Activated CD4-positive, alpha-beta memory T cell treated with anti-CD3 and anti-CD28 coated beads, Interleukin-2, amount 10 ng/mL, durations not matched to agents 7 days and 5 days (primary cell): ENCODE measurements at regions of chr11 and their contacts with region 1.

Region 1: DNA sequence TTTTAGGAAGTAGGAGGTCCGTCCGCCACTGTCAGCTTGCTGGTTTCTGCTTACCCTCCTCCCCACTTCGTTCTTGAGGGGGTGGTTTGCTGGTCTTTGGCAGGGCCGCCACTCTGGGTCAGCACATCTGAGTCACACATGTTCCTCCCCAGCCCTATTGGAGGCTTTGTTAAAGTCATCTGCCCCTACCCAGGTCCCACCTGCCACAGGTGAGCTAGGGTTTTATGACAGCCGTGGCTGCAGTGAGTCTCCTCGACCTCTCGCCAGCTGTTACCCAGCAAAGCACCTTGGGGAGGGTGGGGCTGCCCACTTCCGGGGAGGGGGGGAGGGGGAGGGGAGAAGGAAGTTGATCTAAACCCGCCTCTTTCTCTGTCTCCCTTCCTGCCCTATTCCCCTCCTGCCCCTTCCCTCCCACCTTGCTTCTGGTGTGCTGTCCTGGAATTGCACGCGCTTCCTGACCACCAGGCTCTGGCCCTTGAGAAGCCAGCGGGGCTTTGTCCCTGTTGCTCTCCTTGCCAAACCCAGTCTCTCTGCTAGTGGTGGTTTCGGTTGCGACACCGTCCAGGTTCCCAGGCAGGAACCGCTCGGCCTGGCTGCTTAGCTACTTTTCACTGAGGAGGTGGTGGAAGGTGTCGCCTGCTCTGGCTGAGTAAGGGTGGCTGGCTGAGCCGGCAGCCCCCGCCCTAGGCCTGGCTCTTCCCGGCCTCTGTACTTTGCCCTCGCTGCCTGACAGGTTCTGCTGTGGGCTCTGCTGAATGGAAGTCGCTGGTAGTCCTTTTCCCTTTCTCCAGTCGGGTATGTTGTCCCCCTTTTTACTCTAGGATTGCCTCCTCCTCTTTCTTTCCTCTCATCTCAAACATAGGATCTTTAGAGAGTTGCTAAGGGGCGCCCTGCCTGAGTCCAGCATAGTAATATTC is 28.5 kb downstream of the RCOR2 start:
- DNase-seq: peak; percentile 79
- H3K4me3 Mint-ChIP-seq: peak overlapping the region; percentile 93
- H3K27ac Mint-ChIP-seq: peak overlapping the region; percentile 93
- H3K4me1 Mint-ChIP-seq: peaks cover 75% of the 10 kb centered on the region
- H3K27me3 Mint-ChIP-seq: no peaks in the 10 kb centered on the region

Region 2: DNA sequence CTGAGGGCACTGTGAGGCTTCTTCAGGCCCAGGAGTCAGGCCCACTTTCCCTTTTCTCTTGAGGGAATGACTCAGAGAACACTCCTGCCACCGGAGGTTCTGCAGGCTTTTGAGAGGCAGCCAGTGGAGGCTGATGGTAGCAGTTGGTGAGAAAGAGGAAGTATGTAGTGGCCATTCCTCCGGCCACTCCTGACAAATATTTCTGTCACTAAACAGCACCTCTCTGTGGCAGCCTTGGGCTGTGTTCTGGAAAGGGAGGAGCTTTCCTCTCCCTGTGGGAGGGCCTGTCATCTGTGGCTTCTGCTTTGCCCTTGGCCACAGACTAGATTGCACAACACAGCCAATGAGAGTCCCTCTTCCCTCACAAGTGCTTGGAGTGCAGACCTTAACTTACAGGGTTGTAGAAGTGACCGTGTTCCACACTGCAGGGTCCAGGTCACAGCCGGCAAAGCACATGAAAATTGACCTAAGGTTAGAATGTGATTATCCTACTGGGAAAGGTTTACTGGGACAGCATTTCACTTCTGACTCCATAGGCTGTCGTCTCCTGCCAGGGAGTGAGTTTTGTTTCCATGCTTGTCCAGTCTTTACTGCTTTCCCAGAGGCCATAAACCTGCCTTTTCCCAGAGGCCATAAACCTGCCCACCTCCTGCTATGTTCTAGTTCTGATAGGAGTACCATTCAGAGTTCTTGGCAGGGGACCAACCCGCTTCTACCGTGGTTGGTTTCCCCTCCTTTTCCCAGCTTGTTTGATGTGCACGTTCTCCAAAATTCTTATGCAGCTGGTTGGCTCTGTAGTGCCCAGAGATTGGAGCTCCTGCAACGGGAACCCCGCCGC is 16.2 kb before region 1 on chr11:
- CTCF ChIA-PET with region 1: interaction called, 11 read pairs
- POLR2A ChIA-PET with region 1: interaction called, 13 read pairs
- DNase-seq: peak; percentile 59
- H3K4me3 Mint-ChIP-seq: no peak overlapping the region
- H3K27ac Mint-ChIP-seq: no peak overlapping the region
- H3K4me1 Mint-ChIP-seq: peaks cover 63% of the 10 kb centered on the region
- H3K27me3 Mint-ChIP-seq: no peaks in the 10 kb centered on the region

Region 3: GRCh38 chr11:64036087-64037026 is 147.9 kb after region 1 on chr11:
- CTCF ChIA-PET with region 1: no interaction called
- POLR2A ChIA-PET with region 1: no interaction called
- DNase-seq: no peak
- H3K4me3 Mint-ChIP-seq: no peak overlapping the region
- H3K27ac Mint-ChIP-seq: no peak overlapping the region
- H3K4me1 Mint-ChIP-seq: peaks cover 3% of the 10 kb centered on the region
- H3K27me3 Mint-ChIP-seq: peaks cover 33% of the 10 kb centered on the region